Calu3 (cell line): ENCODE measurements at regions of chr20 and their contacts with region 1.

Region 1: GRCh38 chr20:40741507-40742106 is 52.6 kb upstream of the MAFB start:
- DNase-seq: peak; percentile 73
- H3K4me3 Mint-ChIP-seq: no peak overlapping the region
- H3K27ac Mint-ChIP-seq: no peak overlapping the region
- H3K4me1 Mint-ChIP-seq: no peaks in the 10 kb centered on the region
- H3K27me3 Mint-ChIP-seq: peaks cover 100% of the 10 kb centered on the region
- CTCF ChIP-seq: peak; percentile 65

Region 2: DNA sequence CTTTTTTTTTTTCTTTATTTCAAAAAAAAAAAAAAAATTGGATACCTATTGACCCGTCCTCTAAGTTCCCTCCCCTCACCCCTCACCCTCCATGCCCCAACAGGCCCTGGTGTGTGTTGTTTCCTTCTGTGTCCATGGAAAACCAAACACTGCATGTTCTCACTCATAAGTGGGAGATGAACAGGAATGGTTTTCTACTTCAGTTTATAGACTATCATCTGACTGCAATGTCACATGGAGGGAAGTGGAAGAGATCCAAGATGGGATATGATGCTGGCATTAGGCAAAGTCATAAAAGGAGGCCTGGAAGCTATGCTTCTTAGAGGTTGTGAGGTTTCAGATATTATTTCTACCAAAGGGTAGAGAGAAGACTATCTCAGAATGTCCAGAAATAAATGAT is 290.1 kb before region 1 on chr20:
- CTCF ChIA-PET with region 1: interaction called, 10 read pairs
- intact Hi-C with region 1: no loop called
- DNase-seq: no peak
- H3K4me3 Mint-ChIP-seq: no peak overlapping the region
- H3K27ac Mint-ChIP-seq: no peak overlapping the region
- H3K4me1 Mint-ChIP-seq: no peaks in the 10 kb centered on the region
- H3K27me3 Mint-ChIP-seq: peaks cover 89% of the 10 kb centered on the region
- CTCF ChIP-seq: no peak

Region 3: DNA sequence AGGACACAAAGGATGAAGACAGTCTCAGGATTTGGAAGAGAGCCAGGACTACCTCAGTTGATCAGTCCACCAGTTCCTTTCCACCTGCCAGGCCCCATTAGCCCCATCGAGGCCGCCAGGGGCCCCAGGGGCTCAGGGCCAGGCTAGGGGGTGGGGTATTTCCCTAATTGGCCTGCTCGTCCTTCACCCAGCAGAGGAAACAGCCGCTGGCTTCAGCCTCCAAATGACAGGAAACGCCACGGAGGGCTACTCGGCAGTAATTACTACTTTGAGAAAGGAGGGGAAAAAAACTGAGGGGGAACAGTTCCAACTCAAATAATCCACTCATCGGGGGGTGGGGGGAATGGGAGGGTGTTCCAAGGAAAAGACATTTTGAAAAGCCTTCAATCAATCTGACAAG is 95.2 kb before region 1 on chr20:
- CTCF ChIA-PET with region 1: no interaction called
- intact Hi-C with region 1: no loop called
- DNase-seq: no peak
- H3K4me3 Mint-ChIP-seq: no peak overlapping the region
- H3K27ac Mint-ChIP-seq: no peak overlapping the region
- H3K4me1 Mint-ChIP-seq: no peaks in the 10 kb centered on the region
- H3K27me3 Mint-ChIP-seq: peaks cover 85% of the 10 kb centered on the region
- CTCF ChIP-seq: no peak

Region 4: GRCh38 chr20:40945754-40946450 is 204.3 kb after region 1 on chr20:
- CTCF ChIA-PET with region 1: interaction called, 19 read pairs
- intact Hi-C with region 1: loop called (anchors 5 kb)
- DNase-seq: peak; percentile 62
- H3K4me3 Mint-ChIP-seq: no peak overlapping the region
- H3K27ac Mint-ChIP-seq: no peak overlapping the region
- H3K4me1 Mint-ChIP-seq: no peaks in the 10 kb centered on the region
- H3K27me3 Mint-ChIP-seq: peaks cover 66% of the 10 kb centered on the region
- CTCF ChIP-seq: no peak